ENCODE measurements at regions of chr7 and their contacts with region 1.

Region 1: DNA sequence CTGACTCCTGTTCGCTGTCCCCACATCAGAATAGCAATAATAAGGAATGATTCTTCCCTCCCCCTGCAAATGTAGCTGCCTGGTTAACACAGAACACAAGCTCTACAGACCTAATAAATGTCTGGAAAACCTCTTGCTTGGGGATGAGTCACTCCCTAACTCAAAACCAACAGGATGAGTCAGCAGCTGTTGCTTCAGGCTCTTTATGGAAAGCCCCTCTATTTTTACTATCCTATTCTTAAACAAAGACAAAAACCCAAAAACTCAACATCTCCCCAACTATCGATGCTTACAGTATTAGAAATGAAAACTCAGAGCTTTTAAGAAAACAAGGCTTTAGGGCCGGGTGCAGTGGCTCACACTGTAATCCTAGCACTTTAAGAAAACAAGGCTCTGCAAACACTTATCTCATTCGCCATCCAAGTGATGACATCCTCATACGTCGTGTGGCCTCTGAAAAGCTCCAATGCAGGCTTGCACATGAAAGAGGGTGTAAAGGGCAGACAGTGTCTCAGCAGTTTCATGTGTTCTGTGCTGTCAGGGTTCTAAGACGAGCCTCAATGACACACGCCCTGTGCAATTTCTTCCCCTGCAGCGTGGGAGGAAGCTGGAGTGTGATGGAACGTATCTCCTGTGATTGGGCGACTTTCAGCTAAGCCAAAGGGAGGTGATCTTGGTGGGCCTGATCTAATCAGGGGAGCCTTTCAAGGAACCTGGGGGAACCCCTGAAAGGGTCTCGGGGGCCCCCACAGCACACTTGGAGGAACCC is 70.1 kb downstream of the AMZ1 start:
- DNase-seq: peak; percentile 91
- H3K4me3 Mint-ChIP-seq: peak overlapping the region; percentile 48
- H3K27ac Mint-ChIP-seq: peak overlapping the region; percentile 94
- H3K4me1 Mint-ChIP-seq: peaks cover 35% of the 10 kb centered on the region
- H3K27me3 Mint-ChIP-seq: no peaks in the 10 kb centered on the region

Region 2: DNA sequence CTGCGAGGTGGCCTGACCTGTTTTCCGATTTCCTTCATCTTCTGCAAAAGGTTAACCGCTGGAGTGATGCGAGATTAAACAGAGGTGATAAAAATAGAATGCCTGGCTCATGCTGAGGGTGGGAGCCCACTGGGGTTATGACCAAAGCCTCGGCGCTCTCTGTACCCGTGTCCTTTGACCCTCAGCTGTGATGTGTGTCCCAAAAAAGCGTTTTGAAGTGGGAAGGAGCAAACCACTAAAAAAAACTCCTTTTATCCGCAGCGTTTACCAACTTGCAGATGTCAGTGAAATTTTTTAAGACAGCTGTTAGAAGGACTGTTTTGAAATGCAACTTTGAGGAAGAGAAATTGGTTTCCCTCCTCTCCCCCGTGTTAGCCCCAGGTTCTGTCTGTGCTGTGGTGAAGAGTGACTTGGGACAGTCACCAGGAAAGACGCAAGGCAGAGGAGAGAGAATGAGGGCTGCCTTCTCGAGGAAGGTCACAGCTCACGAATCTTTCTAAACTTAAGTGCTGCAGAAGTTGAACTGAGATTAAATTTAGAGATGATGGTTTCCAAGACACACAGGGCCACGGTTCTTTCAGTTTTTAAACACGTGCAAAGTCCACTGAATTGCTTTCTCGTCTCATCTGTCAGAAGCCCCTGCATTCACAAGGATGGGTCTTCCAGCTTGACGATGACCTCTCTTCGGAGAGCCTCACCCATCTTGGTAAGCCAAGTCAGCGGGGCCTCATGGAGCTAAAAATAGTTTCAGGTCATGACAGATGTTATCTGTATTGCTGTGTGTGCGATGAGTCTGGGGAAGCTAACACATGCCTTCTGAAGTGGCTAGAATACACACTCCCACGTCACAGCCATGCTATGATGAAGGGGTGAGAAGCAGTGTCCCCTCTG is 42.5 kb before region 1 on chr7:
- CTCF ChIA-PET with region 1: interaction called, 8 read pairs
- intact Hi-C with region 1: loop called (anchors 1 kb)
- DNase-seq: peak; percentile 72
- H3K4me3 Mint-ChIP-seq: no peak overlapping the region
- H3K27ac Mint-ChIP-seq: peak overlapping the region; percentile 37
- H3K4me1 Mint-ChIP-seq: peaks cover 68% of the 10 kb centered on the region
- H3K27me3 Mint-ChIP-seq: peaks cover 6% of the 10 kb centered on the region

Region 3: GRCh38 chr7:2734751-2735571 is 23.1 kb before region 1 on chr7:
- CTCF ChIA-PET with region 1: interaction called, 4 read pairs
- intact Hi-C with region 1: loop called (anchors 1 kb)
- DNase-seq: peak; percentile 40
- H3K4me3 Mint-ChIP-seq: peak overlapping the region; percentile 14
- H3K27ac Mint-ChIP-seq: no peak overlapping the region
- H3K4me1 Mint-ChIP-seq: peaks cover 26% of the 10 kb centered on the region
- H3K27me3 Mint-ChIP-seq: no peaks in the 10 kb centered on the region

Region 4: GRCh38 chr7:2781636-2782035 is 23.5 kb after region 1 on chr7:
- CTCF ChIA-PET with region 1: interaction called, 3 read pairs
- intact Hi-C with region 1: loop called (anchors 1 kb)
- DNase-seq: no peak
- H3K4me3 Mint-ChIP-seq: no peak overlapping the region
- H3K27ac Mint-ChIP-seq: peak overlapping the region; percentile 46
- H3K4me1 Mint-ChIP-seq: peaks cover 27% of the 10 kb centered on the region
- H3K27me3 Mint-ChIP-seq: no peaks in the 10 kb centered on the region

Region 5: GRCh38 chr7:3028071-3028757 is 270.1 kb after region 1 on chr7:
- CTCF ChIA-PET with region 1: no interaction called
- intact Hi-C with region 1: loop called (anchors 1 kb)
- DNase-seq: peak; percentile 88
- H3K4me3 Mint-ChIP-seq: peak overlapping the region; percentile 65
- H3K27ac Mint-ChIP-seq: peak overlapping the region; percentile 92
- H3K4me1 Mint-ChIP-seq: peaks cover 57% of the 10 kb centered on the region
- H3K27me3 Mint-ChIP-seq: no peaks in the 10 kb centered on the region

Region 6: GRCh38 chr7:3446786-3447185 is 688.7 kb after region 1 on chr7:
- CTCF ChIA-PET with region 1: no interaction called
- intact Hi-C with region 1: no loop called
- DNase-seq: no peak
- H3K4me3 Mint-ChIP-seq: no peak overlapping the region
- H3K27ac Mint-ChIP-seq: no peak overlapping the region
- H3K4me1 Mint-ChIP-seq: no peaks in the 10 kb centered on the region
- H3K27me3 Mint-ChIP-seq: no peaks in the 10 kb centered on the region